SK-N-SH (cell line): ENCODE measurements at regions of chr2 and their contacts with region 1.

Region 1: GRCh38 chr2:10911261-10912075 is at the start of gene KCNF1:
- DNase-seq: peak; percentile 90
- H3K4me3 ChIP-seq: peak within 1 kb of the TSS; percentile 51 to 63
- H3K27ac ChIP-seq: no peak within 1 kb of the TSS
- H3K4me1 ChIP-seq: peaks cover 0 to 12% of the 10 kb centered on the region in 2 experiments; a peak in 1 of 4 replicates
- H3K27me3 ChIP-seq: peaks cover 14% of the 10 kb centered on the region; the same call in 1 of the 2 replicates
- CTCF ChIP-seq: peak; percentile 56
- EP300 ChIP-seq: no peak
- RAD21 ChIP-seq: peak; percentile 41
- polyA plus RNA-seq, gene KCNF1: 0.16 and 0.23 TPM in 2 replicates

Region 2: GRCh38 chr2:10837298-10838266 is 73.9 kb before region 1 on chr2:
- CTCF ChIA-PET with region 1: interaction called, 192 read pairs
- POLR2A ChIA-PET with region 1: no interaction called
- DNase-seq: no peak
- H3K4me3 ChIP-seq: no peak overlapping the region
- H3K27ac ChIP-seq: no peak overlapping the region
- H3K4me1 ChIP-seq: peaks cover 0 to 18% of the 10 kb centered on the region in 2 experiments; a peak in 1 of 4 replicates
- H3K27me3 ChIP-seq: no peaks in the 10 kb centered on the region
- CTCF ChIP-seq: no peak
- EP300 ChIP-seq: no peak
- RAD21 ChIP-seq: no peak

Region 3: DNA sequence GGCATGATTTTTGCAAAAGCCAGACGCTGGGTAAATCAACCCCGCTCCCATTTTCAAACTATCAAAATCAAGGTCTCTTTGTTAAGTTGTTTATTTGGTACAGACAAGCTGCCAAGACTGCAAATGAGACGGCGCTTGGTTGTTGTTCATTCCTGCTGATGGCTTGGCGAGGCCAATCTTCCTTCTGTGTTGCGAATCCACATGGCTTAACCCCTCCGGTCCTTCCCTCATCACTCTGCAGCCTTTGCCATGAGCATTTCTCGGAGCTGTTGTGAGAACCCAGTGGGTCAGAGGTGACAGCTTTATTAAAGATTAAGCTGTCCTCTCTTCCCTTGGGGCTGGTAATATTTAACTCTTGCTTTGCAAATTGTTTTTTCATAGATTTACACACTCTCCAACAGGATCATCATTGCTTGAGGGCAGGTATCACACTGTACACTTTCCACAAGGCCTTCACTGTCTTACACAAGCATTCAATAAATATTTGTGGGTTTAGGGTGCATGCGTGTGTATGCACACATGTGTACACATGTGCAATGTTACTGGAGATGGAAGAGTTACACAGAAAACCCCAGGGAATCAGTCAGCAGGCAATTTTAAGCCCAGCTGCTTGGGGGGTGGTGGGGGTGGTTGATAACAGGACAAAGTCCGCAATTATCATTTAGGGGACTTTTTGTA is 27.5 kb before region 1 on chr2:
- CTCF ChIA-PET with region 1: interaction called, 23 read pairs
- POLR2A ChIA-PET with region 1: no interaction called
- DNase-seq: no peak
- H3K4me3 ChIP-seq: no peak overlapping the region
- H3K27ac ChIP-seq: no peak overlapping the region
- H3K4me1 ChIP-seq: peaks cover 4 to 8% of the 10 kb centered on the region in 2 experiments; a peak in 2 of 4 replicates
- H3K27me3 ChIP-seq: no peaks in the 10 kb centered on the region
- CTCF ChIP-seq: no peak
- EP300 ChIP-seq: no peak
- RAD21 ChIP-seq: no peak

Region 4: GRCh38 chr2:10900216-10901109 is 11.0 kb before region 1 on chr2:
- CTCF ChIA-PET with region 1: interaction called, 27 read pairs
- POLR2A ChIA-PET with region 1: no interaction called
- DNase-seq: peak; percentile 79
- H3K4me3 ChIP-seq: no peak overlapping the region
- H3K27ac ChIP-seq: no peak overlapping the region
- H3K4me1 ChIP-seq: no peaks in the 10 kb centered on the region; a peak in 1 of 4 replicates
- H3K27me3 ChIP-seq: no peaks in the 10 kb centered on the region
- CTCF ChIP-seq: peak; percentile 63
- EP300 ChIP-seq: no peak
- RAD21 ChIP-seq: peak; percentile 58

Region 5: GRCh38 chr2:10931710-10932255 is 20.3 kb after region 1 on chr2:
- CTCF ChIA-PET with region 1: interaction called, 14 read pairs
- POLR2A ChIA-PET with region 1: no interaction called
- DNase-seq: no peak
- H3K4me3 ChIP-seq: no peak overlapping the region
- H3K27ac ChIP-seq: no peak overlapping the region
- H3K4me1 ChIP-seq: peaks cover 14 to 37% of the 10 kb centered on the region in 2 experiments; a peak in 3 of 4 replicates
- H3K27me3 ChIP-seq: no peaks in the 10 kb centered on the region
- CTCF ChIP-seq: no peak
- EP300 ChIP-seq: no peak
- RAD21 ChIP-seq: no peak